ENCODE measurements at regions of chr11 and their contacts with region 1.

Region 1: DNA sequence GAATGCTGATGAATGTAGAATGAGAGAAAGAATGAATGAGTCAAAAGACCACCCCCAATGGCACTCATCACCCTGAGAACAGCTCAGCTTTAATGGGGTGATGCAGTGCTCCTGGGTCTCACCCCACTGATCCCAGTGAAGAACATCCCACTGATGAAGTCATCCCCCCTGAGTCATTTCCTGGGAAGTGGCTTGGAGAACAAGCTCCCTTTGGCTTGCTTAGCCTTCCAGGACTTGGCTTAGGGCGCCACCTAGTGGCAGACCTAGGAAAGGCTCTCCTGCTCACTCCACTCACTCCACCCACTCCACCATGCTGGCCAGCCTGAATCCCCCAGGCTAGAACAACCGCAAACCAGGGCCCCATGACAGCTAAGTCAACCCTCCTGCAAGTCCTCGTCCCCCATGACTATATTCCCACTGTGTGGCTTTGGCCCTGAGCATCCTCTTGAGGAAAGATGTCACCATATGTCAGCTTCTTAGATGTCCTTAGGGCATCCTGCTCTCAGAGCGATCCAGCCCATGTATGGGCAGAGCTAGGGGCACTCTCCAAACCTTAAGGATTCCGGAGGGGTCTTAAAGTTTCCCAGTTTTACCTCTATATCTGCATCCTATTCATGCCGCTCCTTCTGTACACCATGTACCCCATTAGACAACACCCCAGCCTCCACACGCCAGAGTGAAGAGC is 17.8 kb upstream of the TMPRSS13 start:
- DNase-seq: peak; percentile 90 to 96
- H3K4me3 ChIP-seq: no peak overlapping the region
- H3K4me3 Mint-ChIP-seq: no peak overlapping the region
- H3K27ac Mint-ChIP-seq: no peak overlapping the region
- H3K4me1 ChIP-seq: peaks cover 4% of the 10 kb centered on the region
- H3K4me1 Mint-ChIP-seq: peaks cover 17% of the 10 kb centered on the region
- H3K27me3 ChIP-seq: no peaks in the 10 kb centered on the region
- H3K27me3 Mint-ChIP-seq: peaks cover 3% of the 10 kb centered on the region
- CTCF ChIP-seq: peak; percentile 99 to 100

Region 2: GRCh38 chr11:117807482-117808327 is 139.3 kb before region 1 on chr11:
- CTCF ChIA-PET with region 1: interaction called, 28 read pairs
- POLR2A ChIA-PET with region 1: no interaction called
- intact Hi-C with region 1: loop called (anchors 1 kb)
- DNase-seq: peak; percentile 76 to 85
- H3K4me3 ChIP-seq: no peak overlapping the region
- H3K4me3 Mint-ChIP-seq: no peak overlapping the region
- H3K27ac Mint-ChIP-seq: no peak overlapping the region
- H3K4me1 ChIP-seq: no peaks in the 10 kb centered on the region
- H3K4me1 Mint-ChIP-seq: no peaks in the 10 kb centered on the region
- H3K27me3 ChIP-seq: no peaks in the 10 kb centered on the region
- H3K27me3 Mint-ChIP-seq: peaks cover 15% of the 10 kb centered on the region
- CTCF ChIP-seq: peak; percentile 97 to 98

Region 3: DNA sequence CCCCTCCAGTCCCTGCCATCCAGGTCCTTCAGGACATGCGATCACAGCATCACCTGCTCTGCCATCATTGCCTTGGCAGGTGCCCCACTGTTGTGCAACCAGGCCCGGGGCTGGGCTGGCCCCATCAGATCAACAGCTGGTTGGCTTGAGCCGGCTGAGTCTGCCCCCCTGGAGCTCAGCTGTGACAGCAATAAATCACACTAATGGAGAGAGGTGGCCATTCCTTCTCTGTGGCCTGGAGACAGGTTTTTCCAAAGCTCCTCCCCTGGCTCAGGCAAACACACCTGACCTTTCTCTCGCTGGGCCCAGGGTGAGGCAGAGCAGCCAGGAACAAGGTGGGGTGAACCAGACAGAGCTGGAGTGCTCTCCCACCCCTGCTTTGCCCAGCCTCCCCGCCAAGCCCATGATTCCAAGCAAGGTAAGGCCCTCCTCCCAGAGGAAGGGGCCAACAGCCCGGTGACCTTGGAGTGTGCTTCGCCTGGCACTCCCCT is 113.5 kb before region 1 on chr11:
- CTCF ChIA-PET with region 1: interaction called, 26 read pairs
- POLR2A ChIA-PET with region 1: no interaction called
- intact Hi-C with region 1: no loop called
- DNase-seq: peak; percentile 84 to 91
- H3K4me3 ChIP-seq: no peak overlapping the region
- H3K4me3 Mint-ChIP-seq: peak overlapping the region; percentile 12
- H3K27ac Mint-ChIP-seq: no peak overlapping the region
- H3K4me1 ChIP-seq: peaks cover 17% of the 10 kb centered on the region
- H3K4me1 Mint-ChIP-seq: peaks cover 38% of the 10 kb centered on the region
- H3K27me3 ChIP-seq: no peaks in the 10 kb centered on the region
- H3K27me3 Mint-ChIP-seq: peaks cover 4% of the 10 kb centered on the region
- CTCF ChIP-seq: no peak

Region 4: GRCh38 chr11:117876341-117877119 is 70.5 kb before region 1 on chr11 and contains the start of gene FXYD6:
- CTCF ChIA-PET with region 1: interaction called, 23 read pairs
- POLR2A ChIA-PET with region 1: interaction called, 7 read pairs
- intact Hi-C with region 1: no loop called
- DNase-seq: peak; percentile 41 to 55
- H3K4me3 ChIP-seq: peak within 1 kb of the TSS; percentile 51
- H3K4me3 Mint-ChIP-seq: peak within 1 kb of the TSS; percentile 76
- H3K27ac Mint-ChIP-seq: no peak within 1 kb of the TSS
- H3K4me1 ChIP-seq: peaks cover 14% of the 10 kb centered on the region; the same call in 1 of the 2 replicates
- H3K4me1 Mint-ChIP-seq: peaks cover 6% of the 10 kb centered on the region
- H3K27me3 ChIP-seq: peaks cover 17% of the 10 kb centered on the region
- H3K27me3 Mint-ChIP-seq: peaks cover 61% of the 10 kb centered on the region
- CTCF ChIP-seq: no peak
- total RNA-seq, gene FXYD6: 0.86 and 1.0 TPM in 2 replicates

Region 5: GRCh38 chr11:117919781-117920221 is 27.2 kb before region 1 on chr11:
- CTCF ChIA-PET with region 1: interaction called, 19 read pairs
- POLR2A ChIA-PET with region 1: no interaction called
- intact Hi-C with region 1: no loop called
- DNase-seq: peak in 1 of 2 experiments; percentile 51
- H3K4me3 ChIP-seq: no peak overlapping the region
- H3K4me3 Mint-ChIP-seq: no peak overlapping the region
- H3K27ac Mint-ChIP-seq: no peak overlapping the region
- H3K4me1 ChIP-seq: no peaks in the 10 kb centered on the region; the same call in 1 of the 2 replicates
- H3K4me1 Mint-ChIP-seq: no peaks in the 10 kb centered on the region
- H3K27me3 ChIP-seq: no peaks in the 10 kb centered on the region
- H3K27me3 Mint-ChIP-seq: no peaks in the 10 kb centered on the region
- CTCF ChIP-seq: no peak

Region 6: DNA sequence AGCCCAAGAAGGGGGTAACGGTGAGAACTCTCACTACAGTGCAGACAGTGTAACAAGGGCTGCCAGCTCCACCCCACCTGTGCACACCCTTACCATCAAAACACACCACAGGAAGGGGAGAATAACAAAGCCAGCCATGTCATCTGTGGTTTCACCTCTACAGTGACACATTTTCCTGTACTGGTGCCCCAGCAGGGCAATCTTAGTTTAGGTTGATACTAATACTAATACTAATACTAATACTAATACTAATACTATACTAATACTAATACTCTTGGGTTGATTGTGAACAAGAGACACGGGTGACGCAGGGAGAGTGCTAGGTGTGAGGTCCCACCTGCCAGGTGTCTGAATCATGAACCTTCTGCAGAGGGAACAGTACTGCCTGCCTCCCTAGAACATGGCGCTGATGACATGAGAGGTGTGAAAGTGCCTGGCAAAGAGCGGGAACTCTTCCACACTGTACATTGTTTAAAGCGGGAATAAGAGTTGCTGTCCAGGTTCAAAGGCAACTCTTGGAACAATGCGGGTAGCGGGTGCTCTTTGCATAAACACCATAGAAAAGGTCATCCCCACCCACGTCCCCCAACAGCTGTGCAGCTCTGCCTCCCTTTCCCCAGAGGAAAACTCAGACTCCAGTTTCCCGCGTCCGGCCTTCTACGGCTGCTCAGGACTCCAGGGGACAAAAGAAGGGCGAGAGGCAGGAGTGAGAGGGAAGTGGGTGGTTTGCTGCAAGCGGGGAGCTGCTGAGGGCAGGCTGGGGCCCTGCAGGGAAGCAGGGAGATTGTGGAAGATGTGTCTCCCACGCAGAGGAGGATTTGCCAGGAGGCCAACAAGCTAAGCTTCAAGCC is 104.9 kb after region 1 on chr11:
- CTCF ChIA-PET with region 1: interaction called, 44 read pairs
- POLR2A ChIA-PET with region 1: no interaction called
- intact Hi-C with region 1: loop called (anchors 1 kb)
- DNase-seq: peak in 1 of 2 experiments; percentile 31
- H3K4me3 ChIP-seq: no peak overlapping the region
- H3K4me3 Mint-ChIP-seq: no peak overlapping the region
- H3K27ac Mint-ChIP-seq: no peak overlapping the region
- H3K4me1 ChIP-seq: no peaks in the 10 kb centered on the region
- H3K4me1 Mint-ChIP-seq: no peaks in the 10 kb centered on the region
- H3K27me3 ChIP-seq: no peaks in the 10 kb centered on the region
- H3K27me3 Mint-ChIP-seq: no peaks in the 10 kb centered on the region
- CTCF ChIP-seq: no peak